Mucosa of descending colon (tissue), 3 donors: ENCODE measurements at regions of chr20 and their contacts with region 1.

Region 1: DNA sequence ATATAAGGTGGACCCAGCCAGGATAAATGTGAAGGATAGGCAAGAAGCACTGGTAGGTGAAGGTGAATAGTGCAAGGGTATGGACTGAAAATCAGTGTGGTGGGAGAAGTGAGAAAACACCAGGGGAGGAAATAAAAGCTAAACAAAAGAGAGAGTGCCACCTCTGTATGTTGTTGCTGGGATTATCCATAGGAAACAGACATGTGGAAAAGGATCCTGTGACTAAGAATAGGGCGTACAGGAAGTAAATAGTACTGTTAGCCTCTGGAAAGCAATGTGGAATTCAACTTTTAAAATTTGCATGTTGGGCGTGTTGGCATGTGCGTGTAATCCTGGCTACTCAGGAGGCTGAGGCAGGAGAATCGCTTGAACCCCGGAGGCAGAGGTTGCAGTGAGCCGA is 661.7 kb downstream of the KIF16B start:
- DNase-seq: no peak
- ATAC-seq: no peak
- H3K4me3 ChIP-seq: no peak overlapping the region
- H3K4me1 ChIP-seq: no peaks in the 10 kb centered on the region
- CTCF ChIP-seq: no peak

Region 2: GRCh38 chr20:15547119-15547518 is 364.4 kb before region 1 on chr20:
- intact Hi-C with region 1: no loop called
- DNase-seq: no peak
- ATAC-seq: no peak
- H3K4me3 ChIP-seq: no peak overlapping the region
- H3K4me1 ChIP-seq: no peaks in the 10 kb centered on the region
- CTCF ChIP-seq: no peak

Region 3: DNA sequence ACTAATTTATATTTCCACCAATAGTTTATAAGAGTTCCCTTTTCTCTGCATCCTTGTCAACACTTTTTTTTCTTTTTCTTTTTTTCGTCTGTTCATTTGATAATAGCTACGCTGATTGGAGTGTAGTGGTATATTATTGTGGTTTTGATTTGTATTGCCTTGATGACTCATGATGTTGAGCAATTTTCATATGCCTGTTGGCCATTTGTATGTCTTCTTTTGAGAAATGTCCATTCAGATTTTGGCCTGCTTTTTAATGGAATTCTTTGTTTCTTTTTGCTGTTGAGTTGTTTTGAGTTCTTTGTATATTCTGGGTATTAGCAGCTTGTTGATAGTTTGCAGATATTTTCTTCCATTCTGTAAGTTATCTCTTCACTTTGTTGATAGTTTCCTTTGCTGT is 111.7 kb before region 1 on chr20:
- intact Hi-C with region 1: no loop called
- DNase-seq: no peak
- ATAC-seq: no peak
- H3K4me3 ChIP-seq: no peak overlapping the region
- H3K4me1 ChIP-seq: no peaks in the 10 kb centered on the region
- CTCF ChIP-seq: no peak

Region 4: DNA sequence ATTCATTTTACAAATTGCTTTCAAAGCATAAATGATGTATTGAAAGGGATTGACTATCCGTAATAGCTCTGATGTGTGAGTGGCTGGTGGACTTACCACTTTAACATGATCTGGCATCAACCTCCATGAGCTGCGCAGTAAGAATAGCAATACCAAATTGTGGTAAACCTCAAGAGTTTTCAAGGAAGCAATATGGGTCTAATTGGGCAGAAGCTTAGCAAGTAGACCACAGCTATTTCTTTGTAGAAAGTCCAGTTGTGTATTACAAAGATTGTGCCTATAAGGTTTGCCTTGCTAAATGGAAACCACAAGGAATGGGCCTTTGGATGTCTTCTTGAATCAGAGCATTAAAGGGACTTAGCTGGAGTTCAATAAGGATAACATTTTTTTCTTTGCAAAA is 74.9 kb before region 1 on chr20:
- intact Hi-C with region 1: loop called in 1 of 2 experiments (anchors 2 kb)
- DNase-seq: no peak
- ATAC-seq: no peak
- H3K4me3 ChIP-seq: no peak overlapping the region
- H3K4me1 ChIP-seq: no peaks in the 10 kb centered on the region
- CTCF ChIP-seq: no peak